Head of caudate nucleus (tissue), 42 donors: ENCODE measurements at regions of chr12 and their contacts with region 1.

Region 1: DNA sequence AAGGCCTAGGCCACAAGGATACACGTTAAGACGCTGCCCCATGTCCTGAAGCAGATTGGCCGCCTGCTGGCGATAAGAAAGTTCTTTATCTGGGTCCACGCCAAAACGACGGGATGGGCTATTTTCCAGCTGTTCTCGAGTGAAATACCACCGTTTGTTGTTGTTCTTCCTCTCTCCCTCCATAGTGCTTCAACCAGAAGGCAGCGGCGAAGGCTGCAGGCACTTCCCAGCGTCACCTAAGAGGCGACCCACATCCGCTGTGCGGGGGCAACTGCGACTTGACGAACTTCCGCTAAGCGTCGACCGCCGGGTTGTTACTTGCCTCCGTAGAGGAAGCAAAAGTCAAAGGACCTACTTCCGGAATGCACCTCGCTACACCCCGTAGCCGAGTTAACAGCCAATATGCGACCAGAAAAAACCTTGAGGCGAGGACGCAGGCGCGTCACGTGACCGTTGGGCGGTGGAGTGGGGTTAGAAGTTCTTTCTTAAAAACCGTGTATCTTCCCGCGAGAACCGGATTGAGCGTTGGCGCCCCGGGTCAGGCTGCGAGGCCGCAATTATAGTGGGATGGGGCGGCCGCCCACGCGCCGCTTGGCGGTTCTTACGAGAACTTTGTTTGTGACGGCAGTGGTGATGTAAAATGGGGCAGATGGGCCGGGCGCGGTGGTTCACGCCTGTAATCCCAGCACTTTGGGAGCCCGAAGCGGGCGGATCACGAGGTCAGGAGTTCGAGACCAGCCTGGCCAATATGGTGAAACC is at the start of gene CCNT1:
- DNase-seq: peak; percentile 93 to 99 (median 97)

Region 2: GRCh38 chr12:48681738-48682532 is 34.7 kb before region 1 on chr12 and contains the start of gene KANSL2:
- intact Hi-C with region 1: loop called (anchors 5 kb)
- DNase-seq: peak; percentile 94 to 100 (median 99)